Activated CD4-positive, alpha-beta T cell treated with anti-CD3 and anti-CD28 coated beads, Interleukin-2, amount 10 ng/mL, durations not matched to agents 7 days and 5 days (primary cell): ENCODE measurements at regions of chr2 and their contacts with region 1.

Region 1: DNA sequence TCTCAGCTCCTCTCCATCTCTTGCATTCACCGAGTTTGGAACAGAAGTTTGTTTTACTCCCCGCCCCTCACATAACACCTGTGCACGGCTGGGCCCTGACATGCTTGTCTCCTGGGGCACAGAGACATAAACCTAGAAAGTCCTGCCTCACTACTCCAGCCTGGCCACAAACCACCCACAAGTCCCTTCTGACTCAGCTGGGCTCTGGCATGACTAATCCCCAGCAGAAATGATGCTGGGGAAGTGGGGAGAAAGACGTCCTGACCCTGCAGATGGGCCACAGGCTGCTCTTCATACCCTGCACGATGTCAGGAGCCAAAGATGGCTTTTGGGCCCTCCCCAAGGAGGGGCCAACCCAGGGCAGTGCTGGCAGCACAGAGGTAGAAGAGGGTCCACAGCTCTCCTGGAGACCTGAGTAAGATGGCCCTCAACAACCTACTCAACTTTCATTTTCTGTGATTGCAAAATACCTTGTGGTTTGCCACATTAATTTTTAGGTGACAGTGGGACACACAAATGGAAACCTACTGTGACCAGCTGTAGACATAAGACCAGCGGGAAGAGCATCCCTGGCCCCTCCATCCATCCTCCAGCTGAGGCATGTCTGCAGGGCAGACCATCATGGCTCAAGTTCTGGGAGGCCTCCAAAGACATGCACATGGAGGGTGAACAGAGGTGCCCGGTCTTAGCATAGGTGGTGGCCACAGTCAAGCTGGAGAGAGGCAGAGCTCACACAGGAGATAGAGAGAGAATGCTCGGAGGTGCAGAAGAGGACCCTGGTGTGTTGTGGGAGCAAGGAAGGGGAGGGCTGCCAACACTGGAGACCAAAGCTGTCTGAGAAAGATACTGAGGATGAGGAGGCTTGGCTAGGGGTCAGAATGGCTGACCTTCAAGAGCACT is 40.0 kb downstream of the DNMT3A start:
- DNase-seq: peak; percentile 63
- H3K4me3 Mint-ChIP-seq: no peak overlapping the region
- H3K27ac Mint-ChIP-seq: peak overlapping the region; percentile 81
- H3K4me1 Mint-ChIP-seq: peaks cover 58% of the 10 kb centered on the region
- H3K27me3 Mint-ChIP-seq: no peaks in the 10 kb centered on the region

Region 2: DNA sequence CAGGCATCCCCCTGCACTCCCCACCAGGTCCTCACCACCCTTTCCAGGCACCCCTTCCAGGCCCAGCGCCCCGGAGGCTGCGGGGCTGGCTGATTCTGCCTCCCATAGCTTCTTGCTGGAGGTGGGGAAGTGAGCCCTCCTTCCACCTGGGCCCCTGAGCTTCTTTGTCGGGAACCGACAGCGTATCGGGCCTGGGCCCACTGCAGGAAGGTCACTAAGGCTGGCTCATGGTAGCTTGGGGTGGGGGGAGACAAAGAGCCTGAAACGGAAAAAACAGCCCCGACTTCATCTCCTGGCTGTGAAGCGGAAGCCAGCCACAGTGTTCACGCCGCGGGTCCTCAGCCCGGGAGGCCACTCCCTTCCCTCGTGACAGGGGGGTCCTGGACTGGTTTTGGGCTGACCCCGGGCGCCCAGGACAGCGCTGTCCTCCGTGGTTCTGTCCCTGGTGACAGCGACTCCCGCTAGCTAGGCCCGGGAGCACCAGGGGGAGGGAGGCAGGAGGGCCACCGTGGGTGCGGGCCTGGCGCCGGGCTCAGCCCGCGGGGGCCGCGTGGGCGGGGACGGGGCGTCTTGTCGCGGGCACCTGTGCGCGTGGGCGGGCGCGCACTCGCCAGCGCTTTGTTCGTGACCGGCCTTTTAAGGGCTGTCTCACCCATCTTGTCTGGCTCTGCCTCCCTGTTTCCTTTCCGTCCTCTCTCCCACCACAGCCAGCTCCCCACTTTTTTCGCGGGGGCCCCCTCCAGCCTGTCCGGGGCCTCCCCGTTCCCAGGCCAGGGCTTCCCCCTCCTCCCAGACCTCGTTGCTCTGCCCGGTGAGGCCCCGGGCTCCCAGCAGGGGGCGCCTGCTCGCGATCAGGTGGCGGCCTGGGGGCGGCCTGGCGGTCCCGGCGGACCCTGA is 24.9 kb before region 1 on chr2:
- CTCF ChIA-PET with region 1: interaction called, 27 read pairs
- POLR2A ChIA-PET with region 1: no interaction called
- DNase-seq: peak; percentile 74
- H3K4me3 Mint-ChIP-seq: peak overlapping the region; percentile 47
- H3K27ac Mint-ChIP-seq: peak overlapping the region; percentile 97
- H3K4me1 Mint-ChIP-seq: peaks cover 79% of the 10 kb centered on the region
- H3K27me3 Mint-ChIP-seq: no peaks in the 10 kb centered on the region

Region 3: GRCh38 chr2:25286025-25286400 is 15.7 kb before region 1 on chr2:
- CTCF ChIA-PET with region 1: interaction called, 10 read pairs
- POLR2A ChIA-PET with region 1: no interaction called
- DNase-seq: peak; percentile 85
- H3K4me3 Mint-ChIP-seq: peak overlapping the region; percentile 37
- H3K27ac Mint-ChIP-seq: peak overlapping the region; percentile 99
- H3K4me1 Mint-ChIP-seq: peaks cover 45% of the 10 kb centered on the region
- H3K27me3 Mint-ChIP-seq: no peaks in the 10 kb centered on the region